ENCODE measurements at regions of chr10 and their contacts with region 1.

Region 1: DNA sequence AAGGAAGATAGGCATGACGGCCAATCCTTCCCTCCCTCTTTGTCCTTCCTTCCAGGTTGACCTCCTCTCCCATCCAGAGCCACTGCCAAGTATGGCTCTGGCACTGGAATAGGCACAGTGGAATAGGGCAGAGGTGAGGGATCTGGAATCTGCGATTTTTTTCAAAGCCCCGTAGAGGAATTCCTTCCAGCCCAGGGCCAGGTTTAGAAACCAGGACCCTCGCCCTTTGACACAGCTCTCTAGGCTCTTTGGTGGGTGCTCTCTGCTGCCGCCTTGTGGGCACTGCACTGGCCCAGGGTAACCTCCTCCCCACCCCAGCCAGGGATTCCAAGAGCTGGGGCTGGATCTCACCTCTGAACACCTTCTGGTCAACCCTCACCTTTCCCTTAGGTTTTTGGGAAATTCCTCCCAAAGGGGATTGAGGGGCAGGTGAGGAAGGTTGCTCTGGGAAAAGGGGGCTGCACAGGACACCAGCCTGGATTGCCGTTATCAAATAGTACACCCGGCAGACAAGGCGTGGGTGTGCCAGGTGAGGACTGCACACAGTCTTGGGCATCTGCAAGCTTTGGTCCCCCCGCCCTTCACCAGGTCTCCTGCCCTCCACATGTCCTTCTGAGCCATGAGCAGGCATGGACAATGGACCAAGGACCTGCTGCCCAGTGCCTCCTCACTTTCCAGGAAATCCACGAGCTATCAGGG is 22.8 kb downstream of the C10orf105 start:
- H3K4me3 ChIP-seq: no peak overlapping the region
- H3K27ac ChIP-seq: no peak overlapping the region
- H3K4me1 ChIP-seq: no peaks in the 10 kb centered on the region
- CTCF ChIP-seq: peak; percentile 54

Region 2: DNA sequence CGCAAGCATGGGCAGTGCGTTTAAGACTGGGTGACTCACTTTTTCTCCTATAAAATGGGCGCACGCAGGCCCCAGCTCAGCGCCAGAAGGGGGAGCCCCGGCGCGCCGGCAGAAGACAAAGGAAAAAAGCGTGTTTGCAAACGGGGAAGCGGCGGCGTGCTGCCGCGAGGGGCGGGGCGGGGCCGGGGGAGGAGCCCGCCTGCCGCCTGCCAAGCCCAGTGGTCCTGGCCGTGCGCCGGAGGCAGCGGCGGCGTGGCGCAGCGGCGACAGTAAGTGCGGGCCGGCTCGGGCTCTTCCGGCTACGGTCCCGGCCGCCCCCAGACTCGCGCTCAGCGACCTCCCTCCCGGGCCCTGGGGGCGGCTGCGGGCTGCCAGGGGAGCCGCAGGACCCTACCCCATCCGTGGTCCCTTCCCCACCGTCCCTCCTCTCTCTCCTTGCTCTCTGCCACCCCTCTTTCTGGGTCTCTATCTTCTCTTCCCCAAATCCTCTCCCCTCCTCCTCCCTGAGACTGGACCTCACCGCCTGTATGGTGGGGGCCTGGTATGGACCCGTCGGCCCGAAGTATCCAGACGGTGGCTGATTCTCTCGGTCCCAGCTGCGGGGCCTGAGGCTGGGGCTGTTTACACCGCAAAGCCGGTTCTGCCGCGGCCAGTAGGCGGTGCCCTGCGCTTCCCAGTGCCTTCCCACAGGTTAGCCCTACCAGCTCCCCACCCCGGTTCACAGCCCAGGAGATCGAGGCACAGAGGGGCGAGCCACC is 377.6 kb before region 1 on chr10 and contains the start of gene SLC29A3:
- CTCF ChIA-PET with region 1: interaction called, 105 read pairs
- POLR2A ChIA-PET with region 1: interaction called, 3 read pairs
- H3K4me3 ChIP-seq: peak within 1 kb of the TSS; percentile 70
- H3K27ac ChIP-seq: no peak within 1 kb of the TSS; the same call in 1 of the 2 replicates
- H3K4me1 ChIP-seq: no peaks in the 10 kb centered on the region
- CTCF ChIP-seq: peak; percentile 97

Region 3: GRCh38 chr10:71623098-71623985 is 73.4 kb before region 1 on chr10:
- CTCF ChIA-PET with region 1: interaction called, 12 read pairs
- POLR2A ChIA-PET with region 1: no interaction called
- H3K4me3 ChIP-seq: no peak overlapping the region
- H3K27ac ChIP-seq: no peak overlapping the region
- H3K4me1 ChIP-seq: no peaks in the 10 kb centered on the region
- CTCF ChIP-seq: no peak

Region 4: DNA sequence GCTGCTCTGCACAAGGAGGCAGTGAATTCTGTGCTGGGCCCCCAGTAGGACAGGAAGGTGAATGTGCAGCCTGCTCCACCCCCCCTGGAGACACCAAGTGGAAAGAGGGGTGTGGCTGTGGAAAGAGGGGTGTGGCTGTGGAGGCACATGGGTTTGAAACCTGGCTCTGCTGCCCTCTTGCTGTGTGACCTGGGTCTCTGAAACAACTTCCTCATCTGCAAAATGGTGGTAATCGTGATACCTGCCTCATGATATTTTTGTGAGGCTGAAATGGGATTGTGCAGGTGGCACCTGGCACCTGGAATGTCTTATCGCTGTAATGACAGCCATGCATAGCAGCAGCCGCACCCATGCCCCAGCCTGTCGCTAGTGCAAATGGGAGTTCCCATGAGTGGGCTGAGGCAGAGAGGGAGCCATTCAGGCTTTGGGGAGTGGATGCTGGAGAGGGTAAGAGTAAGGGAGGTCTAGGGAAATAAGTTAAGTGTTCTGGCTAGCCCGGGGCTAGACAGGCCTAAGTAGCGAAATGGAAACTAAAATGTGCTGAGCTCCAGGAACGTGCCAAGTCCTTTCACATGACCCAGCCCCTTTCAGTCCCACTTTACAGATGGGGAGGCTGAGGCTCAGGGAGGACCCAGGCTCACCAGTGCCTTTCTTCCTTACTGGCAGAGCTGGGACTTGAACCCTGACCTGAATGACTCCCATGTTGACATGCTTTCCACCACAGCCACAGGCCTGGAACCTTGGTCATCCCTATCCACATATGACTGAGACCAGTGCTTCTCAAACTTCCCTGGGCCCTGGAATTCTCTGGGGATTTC is 12.2 kb before region 1 on chr10:
- CTCF ChIA-PET with region 1: interaction called, 14 read pairs
- POLR2A ChIA-PET with region 1: no interaction called
- H3K4me3 ChIP-seq: no peak overlapping the region
- H3K27ac ChIP-seq: no peak overlapping the region
- H3K4me1 ChIP-seq: no peaks in the 10 kb centered on the region
- CTCF ChIP-seq: no peak

Region 5: GRCh38 chr10:71713135-71714030 is 16.6 kb after region 1 on chr10:
- CTCF ChIA-PET with region 1: interaction called, 55 read pairs
- POLR2A ChIA-PET with region 1: no interaction called
- H3K4me3 ChIP-seq: no peak overlapping the region
- H3K27ac ChIP-seq: no peak overlapping the region
- H3K4me1 ChIP-seq: no peaks in the 10 kb centered on the region
- CTCF ChIP-seq: no peak

Region 6: DNA sequence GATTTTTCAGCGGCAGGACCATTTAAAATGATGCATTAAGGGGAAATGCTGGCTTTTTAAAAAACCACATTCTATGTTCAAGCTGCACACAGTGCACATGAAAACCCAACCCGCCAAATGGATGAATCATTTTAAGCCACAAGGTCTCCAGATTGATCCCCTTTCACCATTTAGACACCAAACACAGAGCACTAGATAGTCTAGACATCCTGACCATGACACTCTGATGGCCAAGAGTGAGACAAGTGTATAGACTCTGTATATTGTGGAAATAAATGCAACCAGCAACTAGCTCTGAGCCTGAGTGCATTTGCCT is 125.6 kb after region 1 on chr10:
- CTCF ChIA-PET with region 1: no interaction called
- POLR2A ChIA-PET with region 1: no interaction called
- H3K4me3 ChIP-seq: no peak overlapping the region
- H3K27ac ChIP-seq: no peak overlapping the region
- H3K4me1 ChIP-seq: no peaks in the 10 kb centered on the region
- CTCF ChIP-seq: no peak

Measured in HEK293 (cell line).